CD4-positive, alpha-beta T cell (primary cell): ENCODE measurements at regions of chr12 and their contacts with region 1.

Region 1: GRCh38 chr12:95224202-95225170 is 6.9 kb downstream of the VEZT start:
- DNase-seq: no peak
- ATAC-seq: no peak
- H3K4me3 ChIP-seq: no peak overlapping the region
- H3K4me3 Mint-ChIP-seq: no peak overlapping the region
- H3K27ac ChIP-seq: no peak overlapping the region
- H3K27ac Mint-ChIP-seq: no peak overlapping the region
- H3K4me1 ChIP-seq: peaks cover 9% of the 10 kb centered on the region
- H3K4me1 Mint-ChIP-seq: peaks cover 63% of the 10 kb centered on the region
- H3K27me3 ChIP-seq: no peaks in the 10 kb centered on the region
- H3K27me3 Mint-ChIP-seq: no peaks in the 10 kb centered on the region
- CTCF ChIP-seq: no peak

Region 2: GRCh38 chr12:93434256-93434865 is 1790.1 kb before region 1 on chr12:
- CTCF ChIA-PET with region 1: no interaction called
- POLR2A ChIA-PET with region 1: no interaction called
- intact Hi-C with region 1: loop called in 1 of 2 experiments (anchors 10 kb)
- DNase-seq: no peak
- ATAC-seq: no peak
- H3K4me3 ChIP-seq: no peak overlapping the region
- H3K4me3 Mint-ChIP-seq: peak overlapping the region; percentile 12
- H3K27ac ChIP-seq: no peak overlapping the region
- H3K27ac Mint-ChIP-seq: no peak overlapping the region
- H3K4me1 ChIP-seq: peaks cover 56% of the 10 kb centered on the region
- H3K4me1 Mint-ChIP-seq: peaks cover 88% of the 10 kb centered on the region
- H3K27me3 ChIP-seq: no peaks in the 10 kb centered on the region
- H3K27me3 Mint-ChIP-seq: no peaks in the 10 kb centered on the region
- CTCF ChIP-seq: no peak

Region 3: GRCh38 chr12:95208678-95209077 is 15.8 kb before region 1 on chr12:
- CTCF ChIA-PET with region 1: no interaction called
- POLR2A ChIA-PET with region 1: no interaction called
- intact Hi-C with region 1: no loop called
- DNase-seq: no peak
- ATAC-seq: no peak
- H3K4me3 ChIP-seq: no peak overlapping the region
- H3K4me3 Mint-ChIP-seq: no peak overlapping the region
- H3K27ac ChIP-seq: no peak overlapping the region
- H3K27ac Mint-ChIP-seq: no peak overlapping the region
- H3K4me1 ChIP-seq: no peaks in the 10 kb centered on the region
- H3K4me1 Mint-ChIP-seq: peaks cover 5% of the 10 kb centered on the region
- H3K27me3 ChIP-seq: no peaks in the 10 kb centered on the region
- H3K27me3 Mint-ChIP-seq: no peaks in the 10 kb centered on the region
- CTCF ChIP-seq: no peak